ENCODE measurements at regions of chr10 and their contacts with region 1.

Region 1: GRCh38 chr10:88926566-88927415 is 25.8 kb downstream of the ACTA2 start:
- DNase-seq: no peak
- CTCF ChIP-seq: no peak

Region 2: DNA sequence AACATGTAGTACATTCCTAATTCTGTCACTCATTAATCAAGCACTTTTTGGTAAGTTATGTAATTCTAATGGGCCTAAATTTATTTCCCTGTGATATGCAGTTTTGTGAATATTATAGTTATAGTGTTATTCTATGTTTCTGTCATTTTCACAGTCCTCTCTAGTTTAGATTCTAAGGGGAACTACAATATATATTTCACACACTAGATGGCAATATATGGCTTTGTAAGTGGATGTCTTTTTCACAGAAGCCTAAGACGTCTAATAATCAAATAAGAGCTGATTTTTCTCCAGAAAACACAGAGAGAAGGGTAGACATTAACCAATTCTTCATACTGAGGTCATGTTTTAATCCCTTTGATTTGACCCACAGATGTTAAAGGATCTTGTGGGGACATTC is 361.7 kb before region 1 on chr10:
- in situ Hi-C with region 1: loop called (anchors 10 kb)
- DNase-seq: peak; percentile 23
- CTCF ChIP-seq: peak; percentile 48

Region 3: GRCh38 chr10:88582806-88583583 is 343.8 kb before region 1 on chr10 and contains the start of gene RNLS:
- in situ Hi-C with region 1: no loop called
- DNase-seq: peak; percentile 60
- CTCF ChIP-seq: peak; percentile 86

Region 4: DNA sequence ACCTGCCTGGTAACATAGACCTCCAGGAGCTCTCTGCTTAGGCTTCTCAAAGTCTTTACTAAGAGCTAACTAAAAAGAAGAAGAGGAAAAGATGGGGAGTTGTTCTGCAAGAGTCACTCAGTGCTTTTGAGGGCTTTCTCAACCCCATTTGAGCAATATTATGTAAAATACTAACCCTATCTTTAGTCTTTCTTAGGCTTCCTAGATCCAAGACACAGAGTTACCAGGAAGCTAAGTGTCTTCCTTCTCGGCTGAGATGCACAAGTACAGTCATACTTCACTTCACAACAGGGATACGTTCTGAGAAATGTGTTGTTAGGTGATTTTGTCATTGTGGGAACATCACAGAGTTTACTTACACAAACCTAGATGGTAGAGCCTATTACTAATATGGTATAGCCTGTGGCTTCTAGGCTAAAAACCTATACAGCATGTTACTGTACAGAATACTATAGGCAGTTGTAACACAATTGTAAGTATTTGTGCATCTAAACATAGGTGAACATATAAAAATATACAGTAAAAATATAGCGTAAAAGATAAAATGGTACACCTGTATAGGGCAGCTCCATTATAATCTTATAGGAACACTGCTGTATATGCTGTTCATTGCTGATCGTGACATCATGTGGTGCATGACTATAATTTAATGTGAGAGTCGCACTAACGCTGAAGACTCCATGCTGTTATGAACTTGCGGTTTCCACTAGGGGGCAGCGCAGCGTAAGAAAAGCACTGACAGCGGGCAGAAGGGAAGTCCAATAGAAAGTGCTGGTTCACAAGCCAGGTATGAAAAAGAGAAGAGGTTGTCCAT is 91.5 kb before region 1 on chr10:
- in situ Hi-C with region 1: loop called (anchors 5 kb)
- DNase-seq: peak; percentile 38
- CTCF ChIP-seq: peak; percentile 87